A673 (cell line): ENCODE measurements at regions of chr1 and their contacts with region 1.

Region 1: GRCh38 chr1:158901623-158902022 is 29.7 kb upstream of the PYHIN1 start:
- DNase-seq: no peak
- H3K4me3 ChIP-seq: no peak overlapping the region
- H3K27ac ChIP-seq: no peak overlapping the region
- H3K4me1 ChIP-seq: no peaks in the 10 kb centered on the region
- H3K27me3 ChIP-seq: peaks cover 14% of the 10 kb centered on the region
- CTCF ChIP-seq: no peak

Region 2: DNA sequence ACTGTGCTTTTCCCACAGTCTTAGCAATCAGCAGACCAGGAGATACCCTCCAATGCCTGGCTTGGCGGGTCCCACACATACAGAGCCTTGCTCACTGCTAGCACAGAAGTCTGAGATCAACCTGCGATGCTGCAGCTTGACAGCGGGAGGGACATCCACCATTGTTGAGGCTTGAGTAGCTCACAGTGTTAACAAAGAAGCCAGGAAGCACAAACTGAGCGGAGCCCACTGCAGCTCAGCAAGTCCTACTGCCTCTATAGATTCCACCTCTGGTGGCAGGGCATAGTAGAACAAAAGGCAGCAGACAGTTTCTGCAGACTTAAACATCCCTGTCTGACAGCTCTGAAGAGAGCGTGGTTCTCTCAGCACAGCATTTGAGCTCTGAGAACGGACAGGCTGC is 37.0 kb before region 1 on chr1:
- CTCF ChIA-PET with region 1: no interaction called
- POLR2A ChIA-PET with region 1: no interaction called
- intact Hi-C with region 1: loop called (anchors 10 kb)
- DNase-seq: no peak
- H3K4me3 ChIP-seq: no peak overlapping the region
- H3K27ac ChIP-seq: no peak overlapping the region
- H3K4me1 ChIP-seq: no peaks in the 10 kb centered on the region
- H3K27me3 ChIP-seq: peaks cover 11% of the 10 kb centered on the region
- CTCF ChIP-seq: no peak